Activated naive CD4-positive, alpha-beta T cell treated with anti-CD3 and anti-CD28 coated beads, Interleukin-2, amount 10 ng/mL, durations not matched to agents 7 days and 5 days (primary cell): ENCODE measurements at regions of chr16 and their contacts with region 1.

Region 1: GRCh38 chr16:56866943-56867830 is 2.2 kb downstream of the SLC12A3 start:
- DNase-seq: peak; percentile 55
- H3K4me3 Mint-ChIP-seq: no peak overlapping the region
- H3K27ac Mint-ChIP-seq: no peak overlapping the region
- H3K4me1 Mint-ChIP-seq: peaks cover 18% of the 10 kb centered on the region
- H3K27me3 Mint-ChIP-seq: no peaks in the 10 kb centered on the region

Region 2: GRCh38 chr16:56851671-56852400 is 15.4 kb before region 1 on chr16:
- CTCF ChIA-PET with region 1: interaction called, 10 read pairs
- DNase-seq: no peak
- H3K4me3 Mint-ChIP-seq: no peak overlapping the region
- H3K27ac Mint-ChIP-seq: no peak overlapping the region
- H3K4me1 Mint-ChIP-seq: peaks cover 25% of the 10 kb centered on the region
- H3K27me3 Mint-ChIP-seq: peaks cover 14% of the 10 kb centered on the region

Region 3: DNA sequence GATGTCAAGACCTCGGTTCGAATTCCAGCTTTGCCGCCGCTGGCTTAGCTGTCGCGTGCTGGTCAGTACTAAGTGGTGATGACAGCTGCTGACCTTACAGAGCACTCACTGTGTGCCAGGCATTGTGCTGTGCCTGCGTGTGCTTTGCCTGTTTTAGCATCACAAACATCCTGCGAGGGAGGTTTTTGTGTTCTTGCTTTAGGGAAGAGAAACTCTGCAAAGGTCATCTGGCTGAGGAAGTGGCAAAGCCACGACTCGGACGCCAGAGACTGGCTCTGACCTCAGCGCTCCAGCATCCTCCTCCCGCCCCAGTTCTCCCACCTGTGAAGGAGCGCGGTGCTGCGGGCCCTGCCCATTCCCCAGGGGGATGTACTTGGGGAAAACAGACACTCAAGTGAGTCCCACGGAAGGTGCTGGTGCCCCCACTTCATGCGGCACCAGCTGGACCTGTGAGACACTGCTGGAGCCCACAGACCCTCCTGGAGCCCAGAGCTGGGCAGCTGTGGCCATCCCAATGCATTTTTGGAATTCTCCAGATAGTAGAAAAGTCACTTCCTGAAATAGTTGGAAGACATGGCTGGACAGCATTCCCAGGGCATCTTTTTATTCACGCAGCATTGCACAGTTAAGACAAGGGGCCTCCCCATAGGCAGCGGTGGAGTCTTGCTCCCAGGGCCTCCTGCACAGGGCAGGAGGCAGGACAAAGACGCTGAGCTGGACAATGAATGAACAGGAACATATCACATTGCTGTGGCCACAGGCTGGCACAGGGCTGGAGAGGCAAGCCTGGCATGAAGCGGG is 44.8 kb after region 1 on chr16:
- CTCF ChIA-PET with region 1: no interaction called
- DNase-seq: no peak
- H3K4me3 Mint-ChIP-seq: no peak overlapping the region
- H3K27ac Mint-ChIP-seq: no peak overlapping the region
- H3K4me1 Mint-ChIP-seq: peaks cover 35% of the 10 kb centered on the region
- H3K27me3 Mint-ChIP-seq: peaks cover 41% of the 10 kb centered on the region

Region 4: GRCh38 chr16:56950881-56951771 is 83.9 kb after region 1 on chr16:
- CTCF ChIA-PET with region 1: interaction called, 96 read pairs
- DNase-seq: peak; percentile 75
- H3K4me3 Mint-ChIP-seq: no peak overlapping the region
- H3K27ac Mint-ChIP-seq: no peak overlapping the region
- H3K4me1 Mint-ChIP-seq: peaks cover 19% of the 10 kb centered on the region
- H3K27me3 Mint-ChIP-seq: no peaks in the 10 kb centered on the region

Region 5: DNA sequence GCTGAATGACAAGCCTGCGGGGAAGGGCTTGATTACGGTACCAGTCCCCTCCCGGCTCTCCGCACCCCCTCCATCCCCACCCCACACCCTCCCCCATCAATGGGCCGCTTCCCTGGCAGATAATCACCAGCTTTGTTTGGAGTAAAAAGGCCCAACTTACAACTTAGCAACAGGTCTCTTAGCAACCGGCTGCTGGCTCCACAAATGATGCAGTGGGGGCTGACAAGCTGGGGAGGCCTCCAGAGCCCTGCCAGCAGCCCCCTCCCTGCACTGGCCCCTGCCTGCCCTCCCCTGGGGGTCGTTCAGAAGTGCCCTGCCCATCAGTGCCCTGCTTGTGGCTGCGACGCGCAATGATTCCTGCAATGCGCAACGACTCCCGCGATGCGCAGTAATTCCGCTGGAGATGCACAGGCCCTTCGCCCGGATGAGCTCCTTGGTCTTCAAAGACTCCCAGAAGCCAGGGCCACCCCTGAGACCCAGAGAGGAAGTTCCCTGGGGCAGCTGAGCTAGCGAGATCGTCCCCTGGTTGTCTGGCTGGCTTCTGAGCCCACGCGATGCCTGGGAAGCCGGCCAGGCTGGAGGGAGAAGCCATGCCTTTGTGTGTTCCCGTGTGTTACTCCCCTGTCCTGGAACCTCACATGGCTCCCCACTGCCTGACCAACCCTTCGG is 248.5 kb after region 1 on chr16:
- CTCF ChIA-PET with region 1: no interaction called
- DNase-seq: no peak
- H3K4me3 Mint-ChIP-seq: no peak overlapping the region
- H3K27ac Mint-ChIP-seq: no peak overlapping the region
- H3K4me1 Mint-ChIP-seq: no peaks in the 10 kb centered on the region
- H3K27me3 Mint-ChIP-seq: no peaks in the 10 kb centered on the region